ENCODE measurements at regions of chr7 and their contacts with region 1.

Region 1: GRCh38 chr7:29105752-29106668 is 40.3 kb downstream of the CPVL start:
- DNase-seq: peak in 1 of 2 donors; percentile 48
- ATAC-seq: peak; percentile 69 to 82 (median 76)
- H3K4me3 ChIP-seq: no peak overlapping the region
- H3K4me3 Mint-ChIP-seq: no peak overlapping the region
- H3K27ac ChIP-seq: no peak overlapping the region
- H3K27ac Mint-ChIP-seq: no peak overlapping the region
- H3K4me1 ChIP-seq: no peaks in the 10 kb centered on the region
- H3K4me1 Mint-ChIP-seq: peaks cover 5 to 9% of the 10 kb centered on the region in 2 donors
- H3K27me3 ChIP-seq: no peaks in the 10 kb centered on the region
- H3K27me3 Mint-ChIP-seq: peaks cover 6 to 21% of the 10 kb centered on the region in 2 donors
- CTCF ChIP-seq: peak; percentile 62

Region 2: GRCh38 chr7:28921822-28922221 is 184.2 kb before region 1 on chr7:
- intact Hi-C with region 1: loop called (anchors 1 kb)
- DNase-seq: peak in 1 of 2 donors; percentile 71
- ATAC-seq: peak; percentile 76 to 89 (median 88)
- H3K4me3 ChIP-seq: no peak overlapping the region
- H3K4me3 Mint-ChIP-seq: no peak overlapping the region
- H3K27ac ChIP-seq: no peak overlapping the region
- H3K27ac Mint-ChIP-seq: no peak overlapping the region
- H3K4me1 ChIP-seq: peaks cover 4% of the 10 kb centered on the region
- H3K4me1 Mint-ChIP-seq: peaks cover 15 to 16% of the 10 kb centered on the region in 2 donors
- H3K27me3 ChIP-seq: peaks cover 2% of the 10 kb centered on the region
- H3K27me3 Mint-ChIP-seq: peaks cover 11 to 13% of the 10 kb centered on the region in 2 donors
- CTCF ChIP-seq: peak; percentile 57

Region 3: DNA sequence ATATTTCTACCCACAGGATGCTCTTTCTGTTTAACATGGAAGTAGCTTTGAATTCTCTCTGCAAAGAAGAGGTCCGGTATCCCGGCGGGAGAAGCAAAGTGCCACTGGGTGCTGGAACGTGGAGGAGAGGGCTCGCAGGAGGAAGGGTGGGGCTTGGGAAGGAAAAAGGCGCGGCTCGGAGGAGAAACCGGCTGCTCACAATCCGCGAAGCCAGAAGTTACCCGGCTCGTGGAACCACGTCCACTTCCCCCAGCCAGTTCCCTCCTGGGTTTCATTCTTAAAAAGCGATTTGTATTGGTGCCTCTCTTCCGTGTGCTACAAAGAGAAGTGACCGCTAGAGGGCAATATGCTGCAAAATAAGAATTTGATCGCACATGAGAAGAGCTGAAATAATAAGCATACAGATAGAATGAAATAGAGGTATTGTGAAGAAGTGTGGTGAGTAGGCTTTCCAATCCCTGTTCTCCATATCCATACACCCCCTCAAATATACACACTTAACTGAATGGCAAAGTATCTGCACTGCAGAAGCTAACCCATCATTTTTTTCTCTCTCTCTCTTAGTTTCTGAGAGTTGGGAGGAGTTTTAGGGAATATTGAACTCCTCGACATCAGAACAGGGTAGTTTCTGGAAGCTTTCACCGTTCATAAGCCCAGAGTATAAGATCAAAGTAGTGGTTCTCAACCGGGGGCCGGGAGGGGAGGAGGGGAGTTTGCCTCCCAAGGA is 179.0 kb before region 1 on chr7:
- intact Hi-C with region 1: loop called (anchors 1 kb)
- DNase-seq: peak; percentile 22 to 82
- ATAC-seq: peak; percentile 91 to 94 (median 91)
- H3K4me3 ChIP-seq: peak overlapping the region; percentile 34
- H3K4me3 Mint-ChIP-seq: peak overlapping the region; percentile 88
- H3K27ac ChIP-seq: no peak overlapping the region
- H3K27ac Mint-ChIP-seq: peak overlapping the region in 1 of 2 donors; percentile 69
- H3K4me1 ChIP-seq: peaks cover 4% of the 10 kb centered on the region
- H3K4me1 Mint-ChIP-seq: peaks cover 20% of the 10 kb centered on the region in 2 donors
- H3K27me3 ChIP-seq: peaks cover 2% of the 10 kb centered on the region
- H3K27me3 Mint-ChIP-seq: peaks cover 7 to 20% of the 10 kb centered on the region in 2 donors
- CTCF ChIP-seq: peak; percentile 81

Region 4: DNA sequence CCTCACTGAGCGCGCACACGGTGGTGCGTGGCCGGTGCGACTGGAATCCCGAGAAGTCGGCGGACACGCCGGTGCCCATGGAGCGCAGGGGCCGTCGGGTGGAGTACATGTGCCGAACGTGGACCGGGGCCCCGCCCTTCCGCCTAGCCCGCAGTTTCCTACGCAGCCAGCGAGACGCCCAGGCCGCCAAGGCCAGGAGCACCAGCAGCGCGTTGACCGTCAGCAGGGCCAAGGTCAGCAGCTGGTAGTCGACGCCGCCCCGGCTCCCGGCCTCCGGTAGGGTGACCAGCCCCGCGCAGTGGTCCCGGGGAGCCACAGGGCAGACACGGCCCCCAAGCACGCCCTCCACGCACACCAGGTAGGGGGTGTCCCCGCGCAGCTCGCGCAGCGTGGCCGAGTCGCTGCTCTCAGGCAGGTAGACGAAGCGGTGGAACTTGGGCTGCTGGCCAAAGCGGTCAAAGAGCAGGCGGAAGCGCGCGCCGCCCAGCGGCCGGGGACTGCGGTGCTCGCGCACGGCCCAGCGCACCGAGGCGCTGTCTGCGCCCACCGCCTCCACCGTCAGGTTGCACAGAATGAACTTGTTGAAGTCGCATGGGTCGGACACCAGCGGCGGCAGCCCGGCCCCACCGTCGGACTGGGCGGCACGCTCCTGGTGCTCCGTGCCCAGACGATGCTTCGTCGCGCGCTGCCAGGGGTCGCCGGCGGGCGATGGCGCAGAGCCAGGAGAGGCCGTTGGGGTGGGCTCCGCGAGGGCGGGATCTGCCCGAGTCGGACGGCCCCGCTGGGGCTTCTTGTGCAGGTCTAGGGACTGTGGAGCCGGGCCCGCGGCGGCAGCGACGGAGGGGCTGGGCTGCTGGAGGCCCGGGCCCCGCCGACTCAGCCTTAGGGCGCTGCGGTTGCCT is 150.0 kb before region 1 on chr7:
- intact Hi-C with region 1: loop called (anchors 1 kb)
- DNase-seq: peak; percentile 23 to 35
- ATAC-seq: peak; percentile 62 to 76 (median 66)
- H3K4me3 ChIP-seq: peak overlapping the region; percentile 23
- H3K4me3 Mint-ChIP-seq: peak overlapping the region; percentile 78
- H3K27ac ChIP-seq: no peak overlapping the region
- H3K27ac Mint-ChIP-seq: no peak overlapping the region
- H3K4me1 ChIP-seq: peaks cover 34% of the 10 kb centered on the region
- H3K4me1 Mint-ChIP-seq: peaks cover 14 to 17% of the 10 kb centered on the region in 2 donors
- H3K27me3 ChIP-seq: peaks cover 42% of the 10 kb centered on the region
- H3K27me3 Mint-ChIP-seq: peaks cover 41 to 55% of the 10 kb centered on the region in 2 donors
- CTCF ChIP-seq: no peak

Region 5: GRCh38 chr7:29017713-29018112 is 88.3 kb before region 1 on chr7:
- intact Hi-C with region 1: no loop called
- DNase-seq: no peak
- ATAC-seq: no peak
- H3K4me3 ChIP-seq: no peak overlapping the region
- H3K4me3 Mint-ChIP-seq: no peak overlapping the region
- H3K27ac ChIP-seq: no peak overlapping the region
- H3K27ac Mint-ChIP-seq: no peak overlapping the region
- H3K4me1 ChIP-seq: no peaks in the 10 kb centered on the region
- H3K4me1 Mint-ChIP-seq: no peaks in the 10 kb centered on the region
- H3K27me3 ChIP-seq: no peaks in the 10 kb centered on the region
- H3K27me3 Mint-ChIP-seq: no peaks in the 10 kb centered on the region
- CTCF ChIP-seq: no peak

Region 6: GRCh38 chr7:29035044-29035740 is 70.8 kb before region 1 on chr7:
- intact Hi-C with region 1: no loop called
- DNase-seq: peak; percentile 5 to 28
- ATAC-seq: peak; percentile 82 to 90 (median 82)
- H3K4me3 ChIP-seq: no peak overlapping the region
- H3K4me3 Mint-ChIP-seq: peak overlapping the region; percentile 66
- H3K27ac ChIP-seq: peak overlapping the region; percentile 58
- H3K27ac Mint-ChIP-seq: peak overlapping the region; percentile 85 to 88
- H3K4me1 ChIP-seq: peaks cover 26% of the 10 kb centered on the region
- H3K4me1 Mint-ChIP-seq: peaks cover 47 to 54% of the 10 kb centered on the region in 2 donors
- H3K27me3 ChIP-seq: no peaks in the 10 kb centered on the region
- H3K27me3 Mint-ChIP-seq: no peaks in the 10 kb centered on the region
- CTCF ChIP-seq: no peak

Region 7: DNA sequence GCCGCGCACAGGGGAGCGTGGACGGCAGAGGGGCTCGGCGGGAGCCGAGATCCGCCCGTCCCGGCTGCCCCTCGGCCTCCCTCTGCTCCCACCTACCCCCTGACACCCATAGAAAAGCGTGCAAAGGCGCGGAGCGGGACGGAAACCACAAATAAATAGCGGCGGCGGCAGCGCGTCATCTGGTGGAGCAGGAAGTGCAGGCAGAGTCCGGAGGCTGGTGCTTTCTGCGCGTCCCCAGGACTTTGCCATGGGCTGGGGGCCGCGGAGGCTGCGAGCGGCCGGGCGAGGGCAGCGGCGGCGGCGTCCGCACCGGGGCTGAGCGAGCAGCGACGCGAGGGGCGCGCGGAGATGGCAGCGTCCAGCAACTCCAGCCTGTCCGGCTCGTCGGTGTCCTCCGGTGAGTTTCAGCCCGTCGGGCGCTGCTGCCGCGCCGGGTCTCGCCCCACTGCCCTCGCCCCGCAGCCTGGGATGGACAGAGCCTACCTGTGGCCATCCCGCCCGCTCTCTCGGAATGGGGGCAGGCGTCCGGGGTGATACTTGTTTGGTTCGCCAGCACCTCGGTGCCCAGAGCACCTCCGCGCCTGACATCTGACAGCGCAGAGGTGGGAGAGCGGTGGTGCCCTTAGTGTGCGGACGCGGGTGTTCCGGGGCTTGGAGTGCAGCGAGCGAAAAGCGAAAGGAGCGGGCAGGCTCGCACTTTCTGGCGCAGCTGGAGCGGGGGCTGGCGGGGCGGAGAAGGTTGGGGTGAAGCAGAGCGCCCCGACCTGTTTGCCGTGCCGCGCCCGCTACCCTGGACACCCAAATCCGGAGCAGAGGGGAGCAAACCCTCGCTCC is 88.8 kb after region 1 on chr7 and contains the start of gene CHN2:
- intact Hi-C with region 1: no loop called
- DNase-seq: peak; percentile 68 to 75
- ATAC-seq: peak; percentile 61 to 79 (median 66)
- H3K4me3 ChIP-seq: peak within 1 kb of the TSS; percentile 79
- H3K4me3 Mint-ChIP-seq: peak within 1 kb of the TSS; percentile 93
- H3K27ac ChIP-seq: peak within 1 kb of the TSS; percentile 67
- H3K27ac Mint-ChIP-seq: peak within 1 kb of the TSS; percentile 88 to 92
- H3K4me1 ChIP-seq: peaks cover 19% of the 10 kb centered on the region
- H3K4me1 Mint-ChIP-seq: peaks cover 35 to 46% of the 10 kb centered on the region in 2 donors
- H3K27me3 ChIP-seq: no peaks in the 10 kb centered on the region
- H3K27me3 Mint-ChIP-seq: peaks cover 2 to 7% of the 10 kb centered on the region in 2 donors
- CTCF ChIP-seq: no peak
- total RNA-seq, gene CHN2: 23.2 to 40.6 (median 30.2) TPM